ENCODE measurements at regions of chr1 and their contacts with region 1.

Region 1: GRCh38 chr1:161374373-161374772 is 6.7 kb upstream of the CFAP126 start:
- DNase-seq: no peak
- ATAC-seq: no peak
- H3K4me3 ChIP-seq: no peak overlapping the region
- H3K27ac ChIP-seq: no peak overlapping the region
- H3K4me1 ChIP-seq: no peaks in the 10 kb centered on the region
- H3K27me3 ChIP-seq: no peaks in the 10 kb centered on the region
- CTCF ChIP-seq: peak in 1 of 3 experiments; percentile 28; a peak in 2 of 6 replicates
- EP300 ChIP-seq: no peak
- POLR2A ChIP-seq: no peak
- RAD21 ChIP-seq: peak; percentile 36; the same call in 1 of the 2 replicates

Region 2: GRCh38 chr1:161209790-161210409 is 164.5 kb before region 1 on chr1:
- CTCF ChIA-PET with region 1: interaction called, 38 read pairs
- POLR2A ChIA-PET with region 1: no interaction called
- RAD21 ChIA-PET with region 1: interaction called, 5 read pairs
- SMC1A ChIA-PET with region 1: interaction called, 62 read pairs
- in situ Hi-C with region 1: no loop called
- intact Hi-C with region 1: no loop called
- DNase-seq: no peak
- ATAC-seq: peak; percentile 99
- H3K4me3 ChIP-seq: no peak overlapping the region
- H3K27ac ChIP-seq: no peak overlapping the region
- H3K4me1 ChIP-seq: no peaks in the 10 kb centered on the region
- H3K27me3 ChIP-seq: no peaks in the 10 kb centered on the region
- CTCF ChIP-seq: peak; percentile 88 to 94 (median 89)
- EP300 ChIP-seq: no peak
- POLR2A ChIP-seq: no peak
- RAD21 ChIP-seq: peak; percentile 93

Measured in GM12878 (cell line).